IMR-90 (cell line): ENCODE measurements at regions of chr19 and their contacts with region 1.

Region 1: GRCh38 chr19:44476559-44477408 is 23.5 kb downstream of the ZNF180 start:
- DNase-seq: peak; percentile 15
- ATAC-seq: no peak
- H3K4me3 ChIP-seq: no peak overlapping the region
- H3K27ac ChIP-seq: no peak overlapping the region
- H3K4me1 ChIP-seq: no peaks in the 10 kb centered on the region
- H3K27me3 ChIP-seq: no peaks in the 10 kb centered on the region
- CTCF ChIP-seq: no peak
- POLR2A ChIP-seq: no peak
- RAD21 ChIP-seq: no peak

Region 2: GRCh38 chr19:43872547-43873336 is 604.0 kb before region 1 on chr19:
- CTCF ChIA-PET with region 1: no interaction called
- POLR2A ChIA-PET with region 1: no interaction called
- dilution Hi-C with region 1: no loop called
- in situ Hi-C with region 1: loop called (anchors 25 kb)
- intact Hi-C with region 1: no loop called
- DNase-seq: no peak
- ATAC-seq: no peak
- H3K4me3 ChIP-seq: no peak overlapping the region
- H3K27ac ChIP-seq: no peak overlapping the region
- H3K4me1 ChIP-seq: no peaks in the 10 kb centered on the region
- H3K27me3 ChIP-seq: no peaks in the 10 kb centered on the region
- CTCF ChIP-seq: no peak
- POLR2A ChIP-seq: no peak
- RAD21 ChIP-seq: no peak